Posterior cingulate gyrus (tissue), 11 donors: ENCODE measurements at regions of chr3 and their contacts with region 1.

Region 1: DNA sequence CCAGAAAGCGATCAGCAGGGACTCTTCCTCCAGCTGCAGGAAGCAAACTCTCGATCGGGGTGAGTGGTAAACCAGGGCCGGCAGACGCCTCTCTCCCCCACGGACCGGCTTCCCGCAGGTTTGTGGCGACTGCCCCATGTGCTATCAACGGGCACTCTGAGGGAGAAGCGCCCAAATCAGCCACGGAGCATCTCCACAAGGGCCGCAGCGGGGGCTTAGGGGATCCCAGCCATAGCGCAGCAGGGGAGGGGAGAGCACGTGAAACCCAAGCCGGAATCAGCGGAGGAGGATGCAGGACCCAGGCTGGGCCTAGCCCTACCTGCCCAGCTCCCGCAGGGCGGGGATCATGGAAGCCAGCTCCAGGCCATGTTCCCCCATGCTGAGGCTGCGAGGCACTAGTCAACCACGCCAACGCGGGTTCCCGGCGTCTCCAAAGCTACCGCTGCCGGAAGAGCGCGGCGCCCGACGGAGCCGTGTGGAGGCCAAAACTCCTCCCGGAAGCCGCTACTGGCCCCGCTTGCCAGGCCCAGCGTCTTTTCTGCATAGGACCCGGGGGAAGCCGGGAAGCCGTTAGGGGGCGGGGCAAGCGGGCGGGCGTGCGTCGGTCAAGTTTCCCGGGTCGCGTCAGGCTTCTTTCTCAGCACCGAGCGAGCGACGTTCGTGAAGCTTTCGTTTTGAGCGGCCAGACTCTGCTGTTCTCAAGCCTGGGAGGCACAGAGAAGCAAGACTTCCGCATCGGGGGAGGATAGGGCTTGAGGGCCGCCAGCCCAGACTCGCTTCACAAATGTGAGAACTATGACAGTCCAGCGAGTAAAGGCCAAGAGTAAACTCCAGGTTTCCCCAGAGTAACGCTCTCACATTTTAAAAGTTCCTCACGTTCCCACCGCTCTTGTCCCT is at the start of gene ATR:
- DNase-seq: peak; percentile 92 to 99 (median 96)

Region 2: DNA sequence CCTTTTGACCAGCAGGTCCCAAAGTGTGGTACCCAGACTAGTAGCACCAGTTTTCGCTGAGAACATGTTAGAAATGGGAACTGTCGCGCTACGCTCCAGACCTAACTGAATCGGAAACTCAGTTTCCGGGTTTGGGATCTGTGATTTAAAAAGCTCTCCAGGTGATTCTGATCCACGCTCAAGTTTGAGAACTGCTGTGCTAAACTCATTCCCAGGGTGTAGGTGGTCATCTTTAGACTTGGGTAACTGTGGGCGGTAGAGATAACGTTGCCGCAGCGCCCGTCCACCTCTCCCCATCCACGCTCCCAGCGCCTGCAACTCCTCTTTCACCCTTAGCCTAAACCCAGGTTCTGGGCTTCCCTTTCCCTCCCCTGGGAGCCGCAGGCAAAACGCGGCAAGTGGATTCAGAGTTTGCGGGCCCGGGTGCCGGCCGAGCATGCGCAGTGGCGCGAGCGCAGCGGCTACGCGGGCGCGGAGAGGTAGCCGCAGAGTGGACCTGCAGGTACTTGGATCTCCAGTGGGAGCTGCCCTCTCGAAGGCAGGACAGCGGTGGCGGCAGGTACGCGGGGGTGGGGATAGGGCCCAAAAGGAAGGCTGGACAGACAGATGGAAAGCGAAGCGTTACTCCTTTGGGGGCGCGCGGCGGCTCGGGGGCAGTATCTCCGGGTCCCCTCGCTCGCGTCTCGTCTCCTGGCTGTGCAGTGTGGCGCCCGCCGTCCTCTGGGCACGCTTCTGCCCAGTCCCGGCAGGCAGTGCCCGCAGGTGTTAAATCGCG is 17.6 kb after region 1 on chr3 and contains the start of gene PLS1:
- intact Hi-C with region 1: loop called (anchors 1 kb)
- DNase-seq: peak; percentile 73 to 97 (median 80)

Region 3: DNA sequence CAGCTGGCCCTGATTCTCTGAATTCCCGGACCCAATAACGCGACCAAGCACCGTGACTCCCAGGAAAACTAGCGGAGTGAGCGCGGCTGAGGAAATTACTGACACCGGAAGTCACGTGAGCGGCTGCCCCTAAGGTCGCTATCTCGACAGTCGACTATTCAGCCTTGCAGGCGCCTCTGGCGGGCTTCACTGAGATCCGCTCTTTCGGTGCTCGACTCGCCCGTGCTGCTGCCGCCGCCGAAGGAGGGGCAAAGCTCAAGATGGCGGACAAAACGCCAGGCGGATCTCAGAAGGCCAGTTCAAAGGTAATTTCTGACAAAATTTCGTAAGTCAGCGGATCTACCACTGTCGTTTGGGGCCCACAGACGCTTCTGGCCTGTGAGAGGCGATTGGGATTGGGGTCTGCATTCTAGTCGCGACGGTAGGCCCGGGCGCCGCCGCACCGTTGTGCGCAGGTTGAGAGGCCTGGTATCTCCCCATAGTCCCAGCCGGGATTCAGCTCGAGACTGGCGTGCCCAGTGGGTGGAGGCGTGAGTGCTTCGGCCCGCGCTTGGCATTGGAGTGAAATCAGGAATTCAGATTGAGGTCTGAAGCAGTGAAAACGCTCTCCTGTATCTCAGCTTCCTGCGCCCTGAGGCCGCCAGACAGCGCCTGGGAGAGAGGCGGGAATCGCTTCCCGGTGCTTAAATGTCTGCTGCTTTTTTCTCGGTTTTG is 423.0 kb after region 1 on chr3 and contains the start of gene U2SURP:
- intact Hi-C with region 1: loop called (anchors 2 kb)
- DNase-seq: peak; percentile 94 to 99 (median 97)